Panc1 (cell line): ENCODE measurements at regions of chr16 and their contacts with region 1.

Region 1: GRCh38 chr16:14285513-14286385 is 214.6 kb downstream of the MRTFB start:
- DNase-seq: peak; percentile 99
- ATAC-seq: peak; percentile 95
- H3K4me3 ChIP-seq: peak overlapping the region; percentile 52 to 93
- H3K27ac ChIP-seq: peak overlapping the region; percentile 37
- H3K4me1 ChIP-seq: peaks cover 13% of the 10 kb centered on the region
- H3K27me3 ChIP-seq: no peaks in the 10 kb centered on the region
- CTCF ChIP-seq: peak; percentile 26; the same call in 1 of the 2 replicates

Region 2: DNA sequence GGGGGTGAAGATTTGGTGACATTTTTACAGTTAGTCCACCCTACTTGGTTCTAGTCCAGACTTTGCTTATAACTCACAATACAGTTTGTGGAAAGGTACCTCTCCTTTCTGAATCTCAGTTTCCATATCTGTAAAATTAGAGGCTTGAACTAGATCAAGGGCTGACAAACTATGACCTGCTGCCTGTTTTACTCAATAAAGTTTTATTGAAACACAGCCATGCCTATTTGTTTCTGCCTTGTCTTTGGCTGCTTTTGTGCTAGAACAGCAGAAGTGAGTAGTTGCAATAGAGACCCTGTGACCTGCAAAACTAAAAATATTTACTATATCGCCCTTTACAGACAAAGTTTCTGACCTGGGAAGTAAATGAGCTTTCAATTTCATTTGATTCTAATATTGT is 496.7 kb before region 1 on chr16:
- CTCF ChIA-PET with region 1: interaction called, 11 read pairs
- POLR2A ChIA-PET with region 1: no interaction called
- in situ Hi-C with region 1: no loop called
- intact Hi-C with region 1: no loop called
- DNase-seq: no peak
- ATAC-seq: no peak
- H3K4me3 ChIP-seq: no peak overlapping the region
- H3K27ac ChIP-seq: no peak overlapping the region
- H3K4me1 ChIP-seq: no peaks in the 10 kb centered on the region
- H3K27me3 ChIP-seq: peaks cover 7% of the 10 kb centered on the region
- CTCF ChIP-seq: no peak

Region 3: DNA sequence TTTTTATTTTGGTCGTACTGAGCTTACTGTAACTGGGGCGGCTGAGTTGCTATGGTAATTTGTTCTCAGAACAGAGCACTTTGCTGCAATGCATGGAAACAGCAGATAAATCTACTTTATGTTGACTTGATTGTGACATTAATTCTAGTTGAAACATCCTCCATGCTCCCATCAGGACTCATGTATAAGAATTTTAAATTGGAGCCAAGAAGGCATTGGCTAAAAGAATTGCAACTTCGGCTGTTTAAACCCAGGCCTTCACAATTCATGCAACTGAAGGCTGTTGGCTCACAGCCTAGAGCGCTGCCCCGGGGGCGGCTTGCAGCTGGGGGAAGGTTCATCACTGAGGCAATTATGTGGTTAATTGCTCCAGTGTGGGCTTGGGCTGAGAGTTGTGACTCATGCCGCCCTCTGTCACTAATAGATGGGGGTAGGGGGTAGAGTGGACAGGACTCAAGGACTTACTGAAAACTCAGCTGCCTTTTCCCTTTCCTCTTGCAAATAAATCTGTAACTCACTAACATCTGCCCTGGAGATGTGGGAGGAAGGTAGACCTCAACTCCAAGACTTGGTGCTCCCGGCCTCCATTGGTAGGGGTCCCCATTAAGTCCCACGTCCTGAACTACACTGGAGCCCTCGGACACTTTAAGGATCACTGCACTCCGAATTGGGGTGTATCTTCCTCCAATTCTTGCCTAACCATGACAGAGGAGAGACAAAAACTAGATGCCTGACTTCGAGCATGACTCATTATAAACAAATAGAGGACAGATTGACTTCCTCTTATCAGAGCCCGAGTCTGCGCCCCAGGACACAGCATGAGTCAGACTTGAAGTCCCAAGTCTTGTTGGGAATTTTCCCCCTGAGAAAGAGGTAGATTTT is 328.3 kb before region 1 on chr16:
- CTCF ChIA-PET with region 1: no interaction called
- POLR2A ChIA-PET with region 1: no interaction called
- in situ Hi-C with region 1: no loop called
- intact Hi-C with region 1: no loop called
- DNase-seq: peak; percentile 77
- ATAC-seq: peak; percentile 95
- H3K4me3 ChIP-seq: peak overlapping the region; percentile 33 to 63
- H3K27ac ChIP-seq: peak overlapping the region; percentile 95
- H3K4me1 ChIP-seq: peaks cover 41% of the 10 kb centered on the region
- H3K27me3 ChIP-seq: no peaks in the 10 kb centered on the region
- CTCF ChIP-seq: no peak

Region 4: DNA sequence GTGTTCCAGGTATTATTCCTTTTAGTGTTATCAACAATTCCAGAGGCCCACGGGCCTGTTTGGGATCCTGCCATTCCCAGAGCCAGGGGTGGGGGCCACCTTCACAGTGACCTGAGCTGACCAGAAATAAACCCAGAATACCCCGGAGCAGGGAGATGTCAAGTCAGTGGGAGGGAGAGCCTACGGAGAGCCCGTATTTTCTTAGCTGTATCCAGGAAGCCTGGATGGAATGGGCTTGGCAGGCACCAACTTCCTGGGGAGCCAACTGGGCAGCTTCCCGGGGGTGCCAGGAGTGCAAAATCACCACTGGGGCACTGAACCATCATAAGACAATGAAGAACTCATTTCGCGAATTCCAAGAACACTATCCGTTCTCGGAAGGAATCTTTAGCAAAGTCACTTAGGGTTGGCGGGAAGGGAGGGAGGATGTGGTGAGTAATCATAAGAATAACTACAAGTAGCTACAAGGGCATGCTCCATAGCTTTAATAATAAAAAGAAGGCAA is 227.8 kb before region 1 on chr16:
- CTCF ChIA-PET with region 1: interaction called, 11 read pairs
- POLR2A ChIA-PET with region 1: no interaction called
- in situ Hi-C with region 1: no loop called
- intact Hi-C with region 1: no loop called
- DNase-seq: no peak
- ATAC-seq: no peak
- H3K4me3 ChIP-seq: no peak overlapping the region
- H3K27ac ChIP-seq: no peak overlapping the region
- H3K4me1 ChIP-seq: no peaks in the 10 kb centered on the region
- H3K27me3 ChIP-seq: no peaks in the 10 kb centered on the region
- CTCF ChIP-seq: no peak

Region 5: GRCh38 chr16:14232106-14232864 is 53.5 kb before region 1 on chr16:
- CTCF ChIA-PET with region 1: no interaction called
- POLR2A ChIA-PET with region 1: no interaction called
- in situ Hi-C with region 1: no loop called
- intact Hi-C with region 1: no loop called
- DNase-seq: no peak
- ATAC-seq: no peak
- H3K4me3 ChIP-seq: no peak overlapping the region
- H3K27ac ChIP-seq: no peak overlapping the region
- H3K4me1 ChIP-seq: no peaks in the 10 kb centered on the region
- H3K27me3 ChIP-seq: no peaks in the 10 kb centered on the region
- CTCF ChIP-seq: no peak